Common myeloid progenitor, CD34-positive (primary cell): ENCODE measurements at regions of chr1 and their contacts with region 1.

Region 1: DNA sequence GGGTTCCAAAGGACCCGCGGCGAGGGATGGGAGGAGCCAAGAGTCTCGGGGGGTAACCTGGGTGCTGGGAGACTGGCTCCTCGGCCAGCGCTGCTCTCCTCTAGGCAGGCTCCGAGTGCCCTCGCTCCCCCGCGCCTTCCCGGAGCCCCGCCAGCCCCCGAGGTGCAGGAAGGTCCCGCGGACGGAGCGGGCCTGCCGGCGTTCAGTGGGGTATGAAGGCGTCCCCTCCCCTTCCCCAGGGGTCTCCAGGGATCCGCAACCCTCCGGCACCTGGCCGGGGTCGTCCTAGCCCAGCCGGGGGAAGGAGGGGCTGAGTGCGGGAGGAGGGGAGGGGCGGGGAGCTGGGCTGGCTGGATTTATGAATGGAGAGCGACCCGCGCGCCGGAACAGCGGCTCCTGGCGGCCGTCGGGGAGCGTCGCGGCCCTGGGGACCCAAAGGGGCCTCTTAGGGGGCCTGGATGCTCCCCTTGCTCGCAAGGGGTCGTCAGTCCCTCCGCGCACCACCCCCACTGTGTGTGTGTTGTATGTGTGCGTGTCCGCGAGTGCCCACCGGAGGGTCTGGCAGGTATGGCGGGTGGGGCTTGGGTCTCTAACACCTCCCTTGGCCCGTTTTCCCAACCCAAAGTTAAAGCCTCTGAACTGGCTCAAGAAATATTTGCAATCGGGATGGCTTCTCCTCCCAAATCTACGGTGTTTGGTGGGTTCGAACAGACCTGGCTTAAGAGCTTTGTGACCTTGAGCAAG is 600 bp downstream of the HCRTR1 start:
- DNase-seq: peak; percentile 59 to 78 (median 74)
- H3K4me3 ChIP-seq: peak overlapping the region in 6 of 7 experiments; percentile 33 to 74 (median 64)
- H3K27ac ChIP-seq: no peak overlapping the region
- H3K4me1 ChIP-seq: peaks cover 0 to 10% (median 8%) of the 10 kb centered on the region in 4 experiments
- H3K27me3 ChIP-seq: peaks cover 0 to 12% (median 9%) of the 10 kb centered on the region in 5 experiments

Region 2: DNA sequence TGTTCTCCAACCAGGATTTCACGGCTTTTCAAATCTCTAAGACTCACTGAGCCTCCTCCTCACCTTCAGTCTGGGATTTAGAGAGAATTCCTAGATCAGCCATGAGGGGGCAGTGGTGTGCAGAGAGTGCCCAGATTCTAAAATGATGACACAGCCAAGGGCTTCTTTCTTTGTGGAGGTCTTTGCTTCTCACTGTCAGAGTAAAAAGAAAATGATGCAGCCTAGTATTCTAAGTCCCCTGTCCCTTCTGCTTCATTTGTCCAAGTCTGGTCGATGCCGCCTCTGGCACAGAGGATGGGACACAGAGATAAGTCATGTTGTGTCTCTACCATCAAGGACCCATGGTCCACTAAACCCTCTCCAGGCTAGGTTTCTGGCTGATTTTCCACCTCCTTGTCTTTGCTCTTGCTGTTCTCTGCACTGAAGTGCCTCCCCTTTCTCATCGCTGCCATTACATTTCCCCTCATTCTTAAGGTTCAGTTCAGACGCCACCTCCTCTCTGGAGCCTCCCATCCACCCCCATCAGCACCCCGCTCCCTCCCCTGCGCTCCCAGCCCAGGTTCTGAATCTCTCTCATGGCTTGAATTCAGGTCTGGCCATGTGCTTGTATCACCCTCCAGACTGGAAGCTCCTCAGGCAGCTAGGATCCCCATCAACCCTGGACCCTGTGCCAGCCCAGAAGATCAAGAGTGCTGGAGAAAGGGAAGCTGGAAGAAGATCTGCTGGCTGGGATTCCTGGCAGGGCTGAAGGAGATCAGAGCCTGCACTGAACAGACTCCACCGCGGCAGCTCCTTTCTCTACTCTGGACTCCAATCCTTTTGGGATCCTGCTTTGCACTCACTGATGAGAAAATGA is 53.7 kb before region 1 on chr1:
- CTCF ChIA-PET with region 1: interaction called, 26 read pairs
- POLR2A ChIA-PET with region 1: no interaction called
- DNase-seq: peak; percentile 50 to 78 (median 66)
- H3K4me3 ChIP-seq: no peak overlapping the region
- H3K27ac ChIP-seq: no peak overlapping the region
- H3K4me1 ChIP-seq: no peaks in the 10 kb centered on the region
- H3K27me3 ChIP-seq: no peaks in the 10 kb centered on the region

Region 3: GRCh38 chr1:31572323-31573104 is 45.6 kb before region 1 on chr1:
- CTCF ChIA-PET with region 1: interaction called, 12 read pairs
- POLR2A ChIA-PET with region 1: no interaction called
- DNase-seq: no peak
- H3K4me3 ChIP-seq: no peak overlapping the region
- H3K27ac ChIP-seq: no peak overlapping the region
- H3K4me1 ChIP-seq: peaks cover 7 to 59% (median 35%) of the 10 kb centered on the region in 4 experiments
- H3K27me3 ChIP-seq: peaks cover 0 to 2% (median 0%) of the 10 kb centered on the region in 5 experiments

Region 4: GRCh38 chr1:31605908-31606427 is 12.1 kb before region 1 on chr1:
- CTCF ChIA-PET with region 1: interaction called, 15 read pairs
- POLR2A ChIA-PET with region 1: interaction called, 3 read pairs
- DNase-seq: peak; percentile 17 to 74 (median 65)
- H3K4me3 ChIP-seq: no peak overlapping the region
- H3K27ac ChIP-seq: no peak overlapping the region
- H3K4me1 ChIP-seq: no peaks in the 10 kb centered on the region
- H3K27me3 ChIP-seq: no peaks in the 10 kb centered on the region

Region 5: GRCh38 chr1:31633053-31633452 is 15.0 kb after region 1 on chr1:
- CTCF ChIA-PET with region 1: interaction called, 24 read pairs
- POLR2A ChIA-PET with region 1: no interaction called
- DNase-seq: peak in 2 of 3 donors; percentile 37 to 49
- H3K4me3 ChIP-seq: no peak overlapping the region
- H3K27ac ChIP-seq: no peak overlapping the region
- H3K4me1 ChIP-seq: peaks cover 0 to 3% (median 0%) of the 10 kb centered on the region in 4 experiments
- H3K27me3 ChIP-seq: no peaks in the 10 kb centered on the region

Region 6: GRCh38 chr1:31637915-31638673 is 20.0 kb after region 1 on chr1:
- CTCF ChIA-PET with region 1: interaction called, 12 read pairs
- POLR2A ChIA-PET with region 1: no interaction called
- DNase-seq: no peak
- H3K4me3 ChIP-seq: no peak overlapping the region
- H3K27ac ChIP-seq: no peak overlapping the region
- H3K4me1 ChIP-seq: peaks cover 5 to 31% (median 8%) of the 10 kb centered on the region in 4 experiments
- H3K27me3 ChIP-seq: no peaks in the 10 kb centered on the region